ENCODE measurements at regions of chr2 and their contacts with region 1.

Region 1: DNA sequence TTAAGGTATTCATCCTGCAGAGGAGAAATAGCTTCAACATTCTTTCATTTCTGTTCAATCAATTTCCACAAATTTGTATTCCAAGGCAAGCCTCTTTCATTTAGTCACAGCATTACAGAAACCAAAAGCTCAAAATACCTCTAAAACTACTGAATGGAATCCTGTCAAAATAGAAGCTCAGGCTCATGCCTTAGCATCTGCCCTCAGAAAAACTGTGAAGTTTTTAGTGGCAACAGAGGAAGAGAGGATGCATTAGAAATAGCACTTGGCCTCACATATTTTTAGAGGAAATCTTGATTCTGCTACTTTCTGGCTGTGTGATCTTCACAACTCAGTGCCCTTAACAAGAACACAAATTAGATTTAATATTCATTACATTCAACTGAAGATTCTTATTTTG is 69.1 kb upstream of the GALNT13 start:
- DNase-seq: no peak
- ATAC-seq: no peak
- H3K4me3 ChIP-seq: no peak overlapping the region
- H3K4me3 Mint-ChIP-seq: no peak overlapping the region
- H3K27ac ChIP-seq: no peak overlapping the region
- H3K27ac Mint-ChIP-seq: no peak overlapping the region
- H3K4me1 ChIP-seq: no peaks in the 10 kb centered on the region
- H3K4me1 Mint-ChIP-seq: no peaks in the 10 kb centered on the region
- H3K27me3 ChIP-seq: no peaks in the 10 kb centered on the region
- H3K27me3 Mint-ChIP-seq: no peaks in the 10 kb centered on the region

Region 2: DNA sequence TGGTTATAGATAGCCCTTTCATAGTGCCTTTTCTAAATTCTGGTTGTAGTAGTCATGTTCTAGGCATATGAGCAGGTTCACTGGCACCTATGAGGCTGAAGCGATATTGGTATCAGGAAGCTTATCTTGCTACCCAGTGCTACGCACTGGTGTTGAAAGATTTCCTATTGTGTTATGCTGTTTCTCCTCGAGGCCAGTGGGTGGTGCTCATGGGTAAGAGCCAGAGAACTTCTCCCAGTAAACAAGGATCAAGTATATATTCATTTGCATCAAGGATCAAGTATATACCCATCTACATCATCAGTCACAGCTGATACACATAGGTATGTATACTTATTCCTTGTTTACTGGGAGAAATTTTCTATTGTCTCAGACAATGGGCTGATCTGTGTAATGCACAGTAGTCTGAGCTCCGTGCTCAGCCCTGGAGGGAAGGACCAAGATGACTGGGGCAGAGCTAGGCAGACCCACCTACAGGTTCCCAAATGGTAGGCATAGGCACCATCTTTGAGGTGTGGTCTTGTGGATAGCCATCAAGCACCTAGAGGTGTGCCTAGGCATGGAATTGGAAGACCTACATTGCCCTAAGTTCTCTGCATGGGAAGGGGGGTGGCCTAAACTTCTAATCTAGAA is 32.2 kb before region 1 on chr2:
- CTCF ChIA-PET with region 1: no interaction called
- POLR2A ChIA-PET with region 1: no interaction called
- intact Hi-C with region 1: loop called in 1 of 2 experiments (anchors 1 kb)
- DNase-seq: no peak
- ATAC-seq: no peak
- H3K4me3 ChIP-seq: no peak overlapping the region
- H3K4me3 Mint-ChIP-seq: no peak overlapping the region
- H3K27ac ChIP-seq: no peak overlapping the region
- H3K27ac Mint-ChIP-seq: no peak overlapping the region
- H3K4me1 ChIP-seq: no peaks in the 10 kb centered on the region
- H3K4me1 Mint-ChIP-seq: no peaks in the 10 kb centered on the region
- H3K27me3 ChIP-seq: no peaks in the 10 kb centered on the region
- H3K27me3 Mint-ChIP-seq: no peaks in the 10 kb centered on the region